Posterior vena cava (tissue), 2 donors: ENCODE measurements at regions of chr2 and their contacts with region 1.

Region 1: DNA sequence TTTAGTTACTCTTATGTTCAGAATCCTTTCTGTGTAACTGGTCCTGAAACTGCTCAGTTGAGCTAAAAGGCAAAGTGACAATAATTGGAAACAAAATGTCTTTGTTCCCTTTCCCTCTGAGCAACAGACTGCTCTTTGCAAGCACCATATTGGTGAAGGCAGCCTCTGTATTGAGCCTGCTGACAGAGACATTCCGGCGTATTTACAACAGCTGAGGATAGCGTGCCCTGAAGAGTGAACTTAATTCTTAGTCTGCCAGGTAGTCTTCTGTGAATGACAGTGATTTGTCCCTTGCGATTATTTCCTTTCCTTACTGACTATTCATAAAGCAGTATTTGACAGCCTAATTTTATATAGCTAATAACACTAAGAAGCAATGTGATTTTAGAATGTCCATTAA is 239.1 kb downstream of the CPS1 start:
- DNase-seq: no peak

Region 2: DNA sequence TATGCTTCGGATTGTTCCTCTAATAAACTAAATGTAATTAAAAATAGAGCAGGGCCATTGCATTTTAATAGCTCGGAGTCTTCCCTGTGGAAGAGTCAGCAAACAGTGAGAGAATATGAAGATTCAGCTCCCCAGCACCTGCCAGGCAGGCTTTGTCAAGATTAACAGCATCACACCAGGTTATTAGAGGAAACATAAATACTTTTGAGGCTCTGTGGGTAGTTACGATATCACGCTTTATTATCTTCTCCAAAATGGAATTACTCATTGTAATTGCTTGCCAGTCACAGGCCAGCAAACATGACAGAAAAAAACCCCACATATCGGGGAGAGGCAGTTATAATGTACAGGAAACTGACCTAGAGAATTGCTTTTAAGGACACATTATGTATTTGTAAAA is 64.8 kb after region 1 on chr2:
- intact Hi-C with region 1: no loop called
- DNase-seq: no peak

Region 3: DNA sequence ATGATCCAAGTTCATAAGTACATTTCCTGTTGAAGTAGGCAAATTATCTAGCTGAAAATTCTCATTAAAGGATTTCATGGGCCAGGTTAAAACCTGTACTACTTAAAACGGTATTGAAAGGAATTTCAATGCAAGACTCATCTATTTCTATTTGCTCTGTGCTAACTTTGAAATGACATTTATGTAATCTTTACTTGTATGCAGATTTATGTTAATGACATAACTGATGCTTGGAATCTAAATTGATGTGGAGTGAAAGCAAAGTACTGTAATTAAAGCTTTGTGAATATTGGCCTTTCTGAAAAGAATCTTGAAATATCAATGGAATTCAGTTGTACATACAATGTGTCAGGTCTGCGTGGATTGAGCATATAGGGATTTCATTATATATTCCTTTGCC is 150.9 kb after region 1 on chr2:
- intact Hi-C with region 1: no loop called
- DNase-seq: no peak

Region 4: DNA sequence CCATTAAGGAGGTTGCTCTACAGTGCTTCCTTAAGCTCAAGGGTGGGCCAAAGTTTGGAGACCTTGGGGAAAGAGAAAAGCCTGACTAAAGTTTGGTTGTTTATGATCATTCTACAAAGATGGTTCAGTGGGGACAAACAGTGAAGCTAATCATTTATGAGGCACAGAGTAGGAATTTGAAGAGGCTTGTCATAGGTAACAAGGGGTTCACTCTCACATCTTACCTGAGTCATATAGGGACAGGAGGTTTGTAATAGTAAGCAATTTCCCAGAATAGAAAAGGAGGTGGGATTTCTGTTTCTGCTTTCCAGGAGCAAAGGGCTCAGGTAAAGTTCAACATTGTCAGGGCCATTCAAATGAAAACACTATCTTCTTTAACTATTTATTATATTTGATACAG is 548.8 kb after region 1 on chr2:
- intact Hi-C with region 1: loop called in 1 of 2 experiments (anchors 5 kb)
- DNase-seq: no peak